Heart right ventricle (tissue), 16 donors: ENCODE measurements at regions of chr15 and their contacts with region 1.

Region 1: GRCh38 chr15:40044717-40045571 is 6.0 kb upstream of the SRP14 start:
- DNase-seq: peak; percentile 87 to 89
- ATAC-seq: peak; percentile 91 to 96 (median 94)
- H3K4me3 ChIP-seq: peak overlapping the region in 5 of 10 donors; percentile 2 to 22 (median 19)
- H3K27ac ChIP-seq: peak overlapping the region in 8 of 10 donors; percentile 36 to 74 (median 46)
- H3K4me1 ChIP-seq: peaks cover 3 to 67% (median 59%) of the 10 kb centered on the region in 9 donors
- H3K27me3 ChIP-seq: no peaks in the 10 kb centered on the region
- CTCF ChIP-seq: peak; percentile 79 to 99 (median 95)

Region 2: GRCh38 chr15:40081691-40082194 is 36.8 kb after region 1 on chr15:
- intact Hi-C with region 1: loop called in 2 of 10 experiments (anchors 5 kb)
- DNase-seq: peak; percentile 71 to 87
- ATAC-seq: peak; percentile 86 to 97 (median 95)
- H3K4me3 ChIP-seq: peak overlapping the region in 9 of 10 donors; percentile 21 to 52 (median 42)
- H3K27ac ChIP-seq: peak overlapping the region; percentile 55 to 90 (median 76)
- H3K4me1 ChIP-seq: peaks cover 8 to 40% (median 29%) of the 10 kb centered on the region in 9 donors
- H3K27me3 ChIP-seq: no peaks in the 10 kb centered on the region
- CTCF ChIP-seq: peak in 2 of 9 donors; percentile 11 to 28

Region 3: DNA sequence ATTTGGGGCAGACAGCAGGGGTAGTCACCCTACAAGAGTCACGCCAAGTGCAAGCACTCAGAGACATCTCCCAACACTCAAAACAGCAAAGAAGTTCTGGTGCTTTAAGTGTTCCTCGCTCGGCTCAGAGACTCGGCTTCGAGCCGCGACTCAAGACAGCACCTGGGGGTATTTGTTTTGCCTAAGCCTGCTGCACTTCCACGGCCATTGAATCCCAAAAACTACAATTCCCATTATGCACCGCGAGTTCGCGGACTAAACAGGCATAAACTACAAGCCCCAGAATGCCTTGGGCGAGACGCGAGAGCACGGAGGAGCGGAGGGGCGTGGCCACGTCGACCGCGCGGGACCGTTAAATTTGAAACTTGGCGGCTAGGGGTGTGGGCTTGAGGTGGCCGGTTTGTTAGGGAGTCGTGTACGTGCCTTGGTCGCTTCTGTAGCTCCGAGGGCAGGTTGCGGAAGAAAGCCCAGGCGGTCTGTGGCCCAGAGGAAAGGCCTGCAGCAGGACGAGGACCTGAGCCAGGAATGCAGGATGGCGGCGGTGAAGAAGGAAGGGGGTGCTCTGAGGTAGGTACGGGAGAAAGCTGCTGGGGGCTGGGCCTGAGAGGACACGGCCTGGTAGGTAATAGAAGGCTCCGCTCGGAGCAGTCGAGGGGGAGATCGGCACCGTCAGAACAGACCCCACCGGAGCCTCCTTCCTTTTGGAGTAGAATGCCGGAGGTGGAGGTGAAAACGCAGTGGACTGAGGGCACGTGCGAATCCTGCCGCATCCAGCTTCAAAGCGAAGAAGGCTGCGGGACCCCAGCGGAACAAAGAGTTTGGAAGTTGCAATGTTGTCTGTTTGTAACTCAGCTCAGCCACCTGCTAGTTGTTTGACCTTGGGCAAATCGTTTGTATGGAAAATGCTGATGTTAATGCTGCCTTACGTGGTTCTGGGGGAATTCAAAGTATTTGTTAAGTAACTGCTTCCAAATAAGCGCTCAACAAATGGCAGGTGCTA is 116.0 kb after region 1 on chr15 and contains the start of gene BUB1B:
- intact Hi-C with region 1: loop called in 5 of 10 experiments (anchors 5 kb)
- DNase-seq: peak; percentile 89 to 96
- ATAC-seq: peak; percentile 94 to 99 (median 98)
- H3K4me3 ChIP-seq: peak within 1 kb of the TSS; percentile 32 to 66 (median 58)
- H3K27ac ChIP-seq: peak within 1 kb of the TSS in 1 of 10 donors; percentile 24
- H3K4me1 ChIP-seq: peaks cover 0 to 30% (median 10%) of the 10 kb centered on the region in 9 donors
- H3K27me3 ChIP-seq: no peaks in the 10 kb centered on the region
- CTCF ChIP-seq: peak in 1 of 9 donors; percentile 5
- total RNA-seq, gene BUB1B: 0.42 to 5.1 (median 1.3) TPM

Region 4: DNA sequence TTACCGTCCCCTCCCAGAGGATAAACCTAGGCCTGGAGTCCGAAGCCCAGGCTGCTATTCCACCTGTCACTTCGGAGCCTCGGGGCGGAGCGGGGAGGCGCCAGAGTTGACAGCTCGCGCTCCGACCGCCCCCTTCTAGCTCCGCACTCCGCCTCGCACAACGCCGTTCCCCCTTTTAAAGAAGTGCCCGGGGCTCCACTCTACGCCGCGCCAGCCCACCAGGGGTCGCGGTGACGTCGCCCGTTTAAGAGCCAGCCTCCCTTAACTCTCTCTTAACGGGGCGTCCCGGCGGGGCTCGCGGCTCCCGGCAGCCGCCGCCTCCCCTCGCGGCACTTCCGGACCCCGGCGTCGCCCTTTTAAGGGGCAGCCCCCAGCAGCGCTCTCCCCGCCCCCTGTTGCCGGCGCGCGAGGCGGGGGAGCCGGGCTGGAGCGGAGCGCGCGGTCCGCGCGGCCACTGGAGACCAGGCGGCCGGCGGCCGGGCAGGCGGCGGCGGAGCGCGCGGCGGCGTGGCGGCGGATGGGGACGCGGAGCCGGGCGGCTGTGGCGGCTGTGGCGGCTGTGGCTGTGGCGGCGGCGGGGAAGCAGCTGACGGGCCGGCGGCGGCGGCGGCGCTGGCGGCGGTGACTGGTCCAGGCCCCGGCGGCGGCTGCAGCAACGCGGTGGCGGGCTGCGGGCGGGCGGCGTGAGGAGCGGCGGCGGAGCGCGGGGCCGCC is 278.5 kb after region 1 on chr15 and contains the start of gene INAFM2:
- intact Hi-C with region 1: no loop called
- DNase-seq: peak; percentile 90 to 94
- ATAC-seq: peak; percentile 90 to 93 (median 92)
- H3K4me3 ChIP-seq: peak within 1 kb of the TSS; percentile 63 to 93 (median 82)
- H3K27ac ChIP-seq: peak within 1 kb of the TSS; percentile 78 to 94 (median 90)
- H3K4me1 ChIP-seq: peaks cover 7 to 54% (median 42%) of the 10 kb centered on the region in 9 donors
- H3K27me3 ChIP-seq: no peaks in the 10 kb centered on the region
- CTCF ChIP-seq: peak; percentile 68 to 86 (median 77)
- total RNA-seq, gene INAFM2: 32.5 to 63.9 (median 40.9) TPM